Pancreas (tissue), 10 donors: ENCODE measurements at regions of chr11 and their contacts with region 1.

Region 1: GRCh38 chr11:60363542-60364510 is 14.5 kb upstream of the MS4A7 start:
- DNase-seq: peak in 4 of 6 donors; percentile 33 to 74 (median 47)
- ATAC-seq: peak; percentile 75 to 97 (median 94)
- H3K4me3 ChIP-seq: no peak overlapping the region
- H3K27ac ChIP-seq: no peak overlapping the region
- H3K4me1 ChIP-seq: no peaks in the 10 kb centered on the region
- H3K27me3 ChIP-seq: no peaks in the 10 kb centered on the region
- CTCF ChIP-seq: peak; percentile 58 to 75 (median 58)

Region 2: DNA sequence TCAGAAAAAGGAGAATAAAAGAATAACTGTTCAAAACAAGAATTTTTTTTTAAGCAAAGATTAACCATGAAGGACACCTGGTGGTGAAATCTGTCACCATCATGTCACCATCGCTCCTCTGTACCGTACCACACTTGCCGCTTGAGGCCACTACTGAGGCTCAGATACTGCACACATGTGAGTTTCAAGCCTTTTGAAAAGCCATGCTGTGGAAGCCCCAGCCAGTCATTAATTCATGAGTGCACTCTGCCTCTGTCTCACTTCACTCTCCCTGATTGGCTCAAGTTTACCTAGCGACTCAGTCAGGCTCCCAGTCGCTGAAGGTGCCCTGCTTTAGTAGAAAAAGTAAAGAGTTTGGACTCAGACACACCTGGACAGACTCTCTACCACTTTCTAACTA is 122.2 kb after region 1 on chr11:
- intact Hi-C with region 1: loop called in 2 of 3 experiments (anchors 10 kb)
- DNase-seq: peak in 4 of 6 donors; percentile 21 to 51 (median 24)
- ATAC-seq: peak; percentile 61 to 91 (median 86)
- H3K4me3 ChIP-seq: no peak overlapping the region
- H3K27ac ChIP-seq: no peak overlapping the region
- H3K4me1 ChIP-seq: no peaks in the 10 kb centered on the region
- H3K27me3 ChIP-seq: no peaks in the 10 kb centered on the region
- CTCF ChIP-seq: peak; percentile 29 to 48 (median 38)

Region 3: DNA sequence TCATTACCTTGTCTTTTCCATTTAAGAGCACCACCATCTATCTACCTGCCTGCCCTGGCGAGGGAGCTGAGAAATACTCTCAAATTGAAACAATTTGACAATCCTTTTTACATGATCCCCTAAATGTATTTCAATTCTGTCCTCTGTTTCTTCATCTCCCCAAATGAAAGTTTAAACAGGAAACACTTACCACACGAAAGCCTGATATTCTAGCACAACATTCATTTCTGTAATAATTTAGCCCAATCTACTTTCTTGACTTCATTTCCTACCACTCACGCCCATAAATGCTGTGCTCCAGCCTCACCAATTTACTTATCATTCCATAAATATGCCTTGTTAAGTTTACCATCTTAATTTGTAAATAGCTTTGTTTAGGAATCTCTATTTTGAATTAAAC is 245.8 kb after region 1 on chr11:
- intact Hi-C with region 1: loop called in 2 of 3 experiments (anchors 10 kb)
- DNase-seq: no peak
- ATAC-seq: no peak
- H3K4me3 ChIP-seq: no peak overlapping the region
- H3K27ac ChIP-seq: no peak overlapping the region
- H3K4me1 ChIP-seq: no peaks in the 10 kb centered on the region
- H3K27me3 ChIP-seq: peaks cover 0 to 4% (median 0%) of the 10 kb centered on the region in 4 donors
- CTCF ChIP-seq: no peak